ENCODE measurements at regions of chr1 and their contacts with region 1.

Region 1: GRCh38 chr1:94854458-94855306 is 34.5 kb downstream of the SLC44A3 start:
- DNase-seq: peak; percentile 96

Region 2: GRCh38 chr1:94648225-94649007 is 206.3 kb before region 1 on chr1:
- CTCF ChIA-PET with region 1: no interaction called
- POLR2A ChIA-PET with region 1: no interaction called
- DNase-seq: no peak

Region 3: DNA sequence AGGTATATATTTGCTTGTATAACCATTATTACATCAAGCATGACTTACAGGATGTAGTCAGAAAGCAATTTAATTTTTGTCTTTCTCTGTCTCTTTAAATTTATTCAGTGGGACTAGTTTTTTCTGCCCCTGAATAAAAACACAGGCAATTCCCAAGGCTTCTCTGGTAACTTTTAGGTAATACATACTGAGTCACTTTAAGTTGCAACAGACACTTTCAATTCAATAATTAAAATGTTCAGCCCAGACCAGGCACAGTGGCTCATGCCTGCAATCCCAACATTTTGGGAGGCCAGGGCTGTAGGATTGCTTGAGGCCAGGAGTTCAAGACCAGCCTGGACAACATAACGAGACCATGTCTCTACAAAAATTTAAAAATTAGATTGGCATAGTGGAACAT is 22.2 kb before region 1 on chr1:
- CTCF ChIA-PET with region 1: interaction called, 10 read pairs
- POLR2A ChIA-PET with region 1: no interaction called
- DNase-seq: no peak

Region 4: GRCh38 chr1:94873522-94874351 is 19.1 kb after region 1 on chr1:
- CTCF ChIA-PET with region 1: interaction called, 10 read pairs
- POLR2A ChIA-PET with region 1: no interaction called
- DNase-seq: no peak

Region 5: DNA sequence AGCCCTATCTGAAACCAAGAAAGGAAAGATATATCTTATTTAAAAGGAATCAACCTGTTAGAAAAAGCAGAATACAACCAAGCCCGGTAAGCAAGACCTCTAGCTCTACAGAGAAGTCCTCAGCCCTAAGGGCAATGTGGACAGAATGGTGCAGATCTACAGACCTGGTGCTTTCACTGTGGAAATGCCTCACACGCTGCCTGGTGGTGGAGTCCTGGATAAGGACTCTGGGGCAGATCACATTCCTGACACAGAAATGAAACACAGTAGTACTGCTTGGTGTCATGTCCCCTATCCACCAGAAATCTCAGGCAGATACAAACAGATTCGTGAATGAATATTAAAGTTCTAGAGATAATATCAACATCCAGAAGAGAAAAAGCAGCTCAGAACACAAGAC is 65.4 kb after region 1 on chr1:
- CTCF ChIA-PET with region 1: interaction called, 11 read pairs
- POLR2A ChIA-PET with region 1: interaction called, 3 read pairs
- DNase-seq: no peak

Region 6: DNA sequence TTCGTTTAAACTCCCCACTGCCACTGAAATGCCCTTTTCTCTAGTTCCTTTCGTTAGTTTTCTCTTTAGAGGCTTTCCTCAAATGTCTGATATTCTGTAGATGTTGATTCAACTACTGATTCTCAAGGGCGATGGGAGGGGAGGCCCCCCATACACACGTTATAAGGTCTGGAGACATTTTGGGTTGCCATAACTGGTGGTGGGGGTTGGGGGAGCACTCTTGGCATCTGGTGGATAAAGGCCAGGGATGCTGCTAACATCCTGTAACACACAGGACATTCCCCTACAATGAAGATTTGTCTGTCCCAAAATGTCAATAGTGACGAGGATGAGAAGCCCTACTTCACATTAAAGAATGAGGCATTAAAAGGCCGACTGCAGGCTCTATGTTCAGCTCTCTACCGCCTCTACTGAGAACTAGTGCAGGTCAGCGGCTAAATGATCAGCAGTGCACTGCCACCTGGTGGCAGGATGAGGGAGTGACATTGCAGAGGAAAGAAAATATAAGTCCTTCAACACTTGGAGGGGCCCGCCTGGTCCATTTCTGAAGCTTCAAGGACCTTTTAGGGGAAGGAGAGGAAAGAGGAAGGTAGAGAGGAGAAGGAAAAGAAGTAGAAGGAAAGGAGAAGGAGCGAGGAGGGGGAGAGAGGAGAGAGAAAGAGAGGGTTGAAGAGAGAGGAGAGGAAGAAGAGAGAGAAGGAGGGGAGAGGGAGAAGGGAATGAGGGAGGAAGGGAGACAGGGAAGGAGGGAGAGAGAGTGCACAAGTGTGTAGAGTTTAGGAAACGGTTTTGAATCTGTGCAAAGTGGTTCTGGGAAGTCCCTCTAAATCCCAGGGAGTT is 188.7 kb after region 1 on chr1:
- CTCF ChIA-PET with region 1: interaction called, 83 read pairs
- POLR2A ChIA-PET with region 1: interaction called, 8 read pairs
- DNase-seq: peak; percentile 89

Measured in HEK293T (cell line).